ENCODE measurements at regions of chr10 and their contacts with region 1.

Region 1: DNA sequence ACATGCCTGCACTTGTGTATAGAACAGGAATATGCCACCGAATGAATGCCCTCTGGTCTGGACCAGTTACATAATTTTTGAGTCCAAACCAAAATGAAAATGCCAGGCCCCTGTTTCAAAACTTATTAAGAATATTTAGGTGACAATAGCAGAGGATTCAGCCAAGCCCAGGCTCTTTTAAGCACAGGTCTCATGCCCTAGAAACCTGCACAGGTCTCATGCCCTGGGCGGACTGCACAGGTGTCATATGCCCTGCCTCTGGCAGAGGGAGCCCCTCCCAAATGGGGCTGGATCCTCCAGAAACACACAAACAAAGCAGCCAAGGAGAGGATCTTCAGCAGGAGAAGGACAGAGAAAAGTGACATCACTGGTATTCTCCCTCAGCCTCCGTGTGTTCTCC is 605.4 kb upstream of the NRP1 start:
- DNase-seq: peak; percentile 39
- ATAC-seq: no peak
- H3K4me3 ChIP-seq: no peak overlapping the region
- H3K27ac ChIP-seq: no peak overlapping the region
- H3K4me1 ChIP-seq: peaks cover 7% of the 10 kb centered on the region
- H3K27me3 ChIP-seq: no peaks in the 10 kb centered on the region
- CTCF ChIP-seq: peak; percentile 28; the same call in 1 of the 2 replicates

Region 2: GRCh38 chr10:33542752-33543505 is 397.0 kb before region 1 on chr10:
- CTCF ChIA-PET with region 1: no interaction called
- POLR2A ChIA-PET with region 1: no interaction called
- intact Hi-C with region 1: no loop called
- DNase-seq: peak; percentile 96
- ATAC-seq: peak; percentile 94
- H3K4me3 ChIP-seq: peak overlapping the region; percentile 0; the same call in 1 of the 2 replicates
- H3K27ac ChIP-seq: peak overlapping the region; percentile 76
- H3K4me1 ChIP-seq: peaks cover 20% of the 10 kb centered on the region
- H3K27me3 ChIP-seq: no peaks in the 10 kb centered on the region
- CTCF ChIP-seq: no peak

Region 3: GRCh38 chr10:34615770-34616169 is 675.9 kb after region 1 on chr10:
- CTCF ChIA-PET with region 1: no interaction called
- POLR2A ChIA-PET with region 1: interaction called, 23 read pairs
- intact Hi-C with region 1: no loop called
- DNase-seq: no peak
- ATAC-seq: no peak
- H3K4me3 ChIP-seq: no peak overlapping the region
- H3K27ac ChIP-seq: no peak overlapping the region
- H3K4me1 ChIP-seq: peaks cover 6% of the 10 kb centered on the region
- H3K27me3 ChIP-seq: no peaks in the 10 kb centered on the region
- CTCF ChIP-seq: no peak; the same call in 1 of the 2 replicates